Left cardiac atrium (tissue), 4 donors: ENCODE measurements at regions of chr9 and their contacts with region 1.

Region 1: GRCh38 chr9:94799578-94800264 is 73.2 kb downstream of the AOPEP start:
- DNase-seq: no peak
- ATAC-seq: peak in 1 of 2 donors; percentile 85

Region 2: GRCh38 chr9:94853887-94854286 is 54.2 kb after region 1 on chr9:
- intact Hi-C with region 1: loop called in 1 of 2 experiments (anchors 10 kb)
- DNase-seq: no peak
- ATAC-seq: no peak